Left ventricle myocardium inferior (tissue), 1 donor: ENCODE measurements at regions of chr12 and their contacts with region 1.

Region 1: DNA sequence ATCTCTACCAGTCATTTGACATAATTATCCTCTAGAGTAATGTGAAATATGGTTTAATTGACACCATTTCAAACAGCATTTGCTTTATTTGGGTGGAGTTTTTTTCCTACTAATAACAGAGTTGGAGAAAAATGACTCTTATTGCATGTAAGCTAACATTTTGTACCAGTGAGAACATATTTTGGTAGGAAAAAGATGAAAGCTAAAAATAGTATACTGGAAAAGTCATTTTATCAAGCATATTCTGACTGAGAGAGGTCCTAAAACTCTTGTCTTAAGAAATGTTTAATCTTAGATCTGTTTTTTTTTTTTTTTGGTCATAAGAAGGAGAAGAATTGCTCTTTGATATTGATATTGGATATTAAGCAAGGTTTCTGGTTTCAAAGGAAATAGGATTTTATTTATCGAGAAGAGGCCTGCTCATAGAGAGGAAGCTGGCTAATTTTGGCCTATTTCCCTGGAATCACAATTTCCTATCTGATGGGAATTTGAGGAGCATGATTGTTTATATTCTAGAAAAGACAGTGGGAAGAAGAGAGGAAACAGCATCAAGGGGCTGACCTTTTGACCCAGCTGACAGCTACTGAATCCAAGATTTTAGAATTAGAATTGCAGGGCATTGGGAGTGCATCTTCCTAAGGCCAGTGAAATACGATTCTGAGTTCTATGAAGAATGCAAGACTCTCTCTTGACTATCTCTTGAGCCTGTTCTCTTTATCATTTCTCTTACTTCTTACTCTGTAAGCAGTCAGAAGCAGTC is 19.4 kb downstream of the OTOGL start:
- DNase-seq: no peak
- H3K4me3 ChIP-seq: no peak overlapping the region
- H3K27ac ChIP-seq: peak overlapping the region; percentile 68
- H3K4me1 ChIP-seq: peaks cover 25% of the 10 kb centered on the region
- H3K27me3 ChIP-seq: no peaks in the 10 kb centered on the region
- CTCF ChIP-seq: no peak

Region 2: DNA sequence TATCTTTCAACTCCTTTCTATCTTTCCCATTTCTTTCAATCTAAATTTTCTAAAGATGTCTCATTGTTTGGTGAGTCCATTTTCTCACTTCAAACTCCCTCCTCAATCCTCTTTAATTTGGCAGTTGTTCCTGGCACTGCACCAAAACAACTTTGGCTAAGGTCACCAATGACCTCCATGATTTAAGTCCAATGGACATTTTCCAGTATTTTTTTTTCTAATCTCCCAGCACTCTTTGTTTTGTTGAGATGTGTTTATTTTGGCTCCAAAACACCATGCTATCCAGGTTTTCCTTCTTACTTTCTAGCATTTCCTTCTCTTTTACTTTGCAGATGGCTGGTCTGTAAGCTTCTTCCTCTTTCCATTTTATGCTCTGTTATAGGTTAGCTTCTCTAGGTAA is 61.9 kb before region 1 on chr12:
- intact Hi-C with region 1: loop called (anchors 2 kb)
- DNase-seq: no peak
- H3K4me3 ChIP-seq: no peak overlapping the region
- H3K27ac ChIP-seq: peak overlapping the region; percentile 29
- H3K4me1 ChIP-seq: peaks cover 22% of the 10 kb centered on the region
- H3K27me3 ChIP-seq: no peaks in the 10 kb centered on the region
- CTCF ChIP-seq: no peak